ENCODE measurements at regions of chr6 and their contacts with region 1.

Region 1: GRCh38 chr6:37207903-37208456 is 38.0 kb downstream of the PIM1 start:
- DNase-seq: peak; percentile 94
- H3K4me3 Mint-ChIP-seq: peak overlapping the region; percentile 17
- H3K27ac Mint-ChIP-seq: peak overlapping the region; percentile 78
- H3K4me1 Mint-ChIP-seq: peaks cover 67% of the 10 kb centered on the region
- H3K27me3 Mint-ChIP-seq: no peaks in the 10 kb centered on the region

Region 2: DNA sequence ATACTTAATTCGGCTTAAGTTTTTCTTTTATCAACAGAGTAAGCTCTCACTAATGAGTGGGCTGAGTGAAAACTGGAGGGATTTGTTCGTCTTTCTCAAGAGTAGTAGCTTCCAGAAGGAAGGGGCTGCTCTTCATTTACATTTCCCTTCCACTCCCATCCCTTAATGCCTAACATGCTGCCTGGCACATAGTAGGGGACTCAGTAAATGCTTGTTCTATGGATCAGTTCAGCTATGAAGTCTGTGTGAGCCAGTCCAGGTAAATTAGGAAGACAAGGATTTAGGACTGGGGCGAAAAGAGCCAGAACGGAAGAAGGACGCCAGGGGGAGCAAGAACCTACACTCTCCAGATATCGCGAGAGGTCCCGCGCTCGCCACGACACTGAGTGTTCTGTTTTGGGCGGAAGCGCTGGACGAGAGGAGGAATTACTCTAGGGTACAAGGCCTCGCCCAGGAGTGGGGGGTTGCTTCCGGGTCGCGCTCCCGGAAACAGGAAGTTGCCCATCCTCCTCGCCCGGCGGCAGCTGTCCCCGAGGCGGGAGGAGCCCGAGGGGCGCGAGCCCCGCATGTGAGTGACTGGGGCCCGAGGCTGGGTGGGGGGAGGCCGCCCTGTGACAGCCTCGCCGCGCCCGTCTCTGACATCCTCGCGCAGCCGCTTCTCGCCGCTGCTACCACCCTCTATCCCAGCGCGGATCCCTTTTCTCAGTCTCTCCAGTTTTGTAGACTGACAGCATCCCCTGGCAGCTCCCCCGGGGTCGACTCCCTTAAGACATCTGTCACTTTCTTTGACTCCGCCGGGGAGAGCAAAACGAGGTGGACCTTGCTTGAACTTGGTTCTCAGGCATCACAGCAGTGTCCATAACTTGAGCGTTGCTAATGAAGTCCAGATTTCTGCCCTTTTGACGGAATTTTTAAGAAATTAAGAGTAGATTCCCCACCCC is 322.2 kb before region 1 on chr6 and contains the start of gene C6orf89:
- CTCF ChIA-PET with region 1: interaction called, 12 read pairs
- POLR2A ChIA-PET with region 1: interaction called, 3 read pairs
- DNase-seq: peak; percentile 98
- H3K4me3 Mint-ChIP-seq: peak within 1 kb of the TSS; percentile 89
- H3K27ac Mint-ChIP-seq: peak within 1 kb of the TSS; percentile 76
- H3K4me1 Mint-ChIP-seq: peaks cover 36% of the 10 kb centered on the region
- H3K27me3 Mint-ChIP-seq: no peaks in the 10 kb centered on the region
- total RNA-seq, gene C6orf89: 51.8 to 53.8 TPM

Region 3: DNA sequence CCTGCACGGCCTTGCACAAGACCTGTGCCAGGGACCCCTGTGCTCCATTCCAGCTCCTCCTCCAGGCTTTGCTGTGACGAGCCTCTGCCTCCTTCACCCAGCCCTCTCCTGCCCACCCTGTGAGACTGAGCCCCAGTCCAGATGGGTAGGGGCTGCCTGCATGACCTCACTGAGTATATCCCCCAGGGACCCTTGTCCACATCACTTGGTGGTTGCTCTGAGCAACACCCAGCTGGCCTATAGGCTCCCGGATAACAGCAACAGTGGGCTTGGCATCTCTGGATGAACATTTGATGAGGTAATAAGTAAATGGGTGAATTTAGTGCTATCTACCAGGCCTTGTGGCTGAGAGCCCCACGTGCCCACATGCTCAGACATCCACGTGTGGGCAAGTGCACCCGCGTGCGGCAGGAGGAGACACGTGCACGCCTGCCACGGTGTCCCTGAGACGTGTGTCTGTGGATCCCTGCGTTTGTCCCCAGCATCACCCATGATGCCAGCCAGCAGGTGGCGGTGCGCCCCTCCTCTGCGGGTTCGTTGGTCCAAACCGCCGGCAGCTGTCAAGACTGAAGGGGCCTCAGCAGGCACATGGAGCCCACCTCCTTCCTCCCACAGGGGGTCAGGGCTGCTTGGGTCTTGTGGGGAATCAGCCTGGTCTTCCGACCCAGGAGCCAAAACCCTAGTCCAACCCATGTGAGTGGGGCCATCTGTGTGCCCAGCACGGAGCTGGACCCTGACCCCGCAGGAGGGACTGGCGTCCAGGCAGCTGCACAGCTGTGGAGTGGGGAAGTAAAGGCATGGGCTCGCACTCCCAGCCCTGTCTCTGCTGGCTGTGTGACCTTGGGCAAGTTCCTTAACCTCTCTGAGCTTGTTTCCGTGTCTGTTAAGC is 156.6 kb before region 1 on chr6:
- CTCF ChIA-PET with region 1: interaction called, 163 read pairs
- POLR2A ChIA-PET with region 1: interaction called, 144 read pairs
- DNase-seq: peak; percentile 94
- H3K4me3 Mint-ChIP-seq: peak overlapping the region; percentile 88
- H3K27ac Mint-ChIP-seq: peak overlapping the region; percentile 99
- H3K4me1 Mint-ChIP-seq: peaks cover 71% of the 10 kb centered on the region
- H3K27me3 Mint-ChIP-seq: no peaks in the 10 kb centered on the region

Region 4: GRCh38 chr6:37190159-37190535 is 17.8 kb before region 1 on chr6:
- CTCF ChIA-PET with region 1: interaction called, 143 read pairs
- POLR2A ChIA-PET with region 1: interaction called, 15 read pairs
- DNase-seq: no peak
- H3K4me3 Mint-ChIP-seq: no peak overlapping the region
- H3K27ac Mint-ChIP-seq: peak overlapping the region; percentile 67
- H3K4me1 Mint-ChIP-seq: peaks cover 71% of the 10 kb centered on the region
- H3K27me3 Mint-ChIP-seq: no peaks in the 10 kb centered on the region

Region 5: GRCh38 chr6:37257634-37258404 is 49.8 kb after region 1 on chr6 and contains the starts of genes TBC1D22B and TMEM217:
- CTCF ChIA-PET with region 1: interaction called, 13 read pairs
- POLR2A ChIA-PET with region 1: interaction called, 4 read pairs
- DNase-seq: peak; percentile 97
- H3K4me3 Mint-ChIP-seq: peak within 1 kb of the TSS; percentile 83
- H3K27ac Mint-ChIP-seq: peak within 1 kb of the TSS; percentile 86
- H3K4me1 Mint-ChIP-seq: peaks cover 44% of the 10 kb centered on the region
- H3K27me3 Mint-ChIP-seq: no peaks in the 10 kb centered on the region
- total RNA-seq, gene TBC1D22B: 16.5 TPM
- total RNA-seq, gene TMEM217: 1.6 to 2.1 TPM

Region 6: DNA sequence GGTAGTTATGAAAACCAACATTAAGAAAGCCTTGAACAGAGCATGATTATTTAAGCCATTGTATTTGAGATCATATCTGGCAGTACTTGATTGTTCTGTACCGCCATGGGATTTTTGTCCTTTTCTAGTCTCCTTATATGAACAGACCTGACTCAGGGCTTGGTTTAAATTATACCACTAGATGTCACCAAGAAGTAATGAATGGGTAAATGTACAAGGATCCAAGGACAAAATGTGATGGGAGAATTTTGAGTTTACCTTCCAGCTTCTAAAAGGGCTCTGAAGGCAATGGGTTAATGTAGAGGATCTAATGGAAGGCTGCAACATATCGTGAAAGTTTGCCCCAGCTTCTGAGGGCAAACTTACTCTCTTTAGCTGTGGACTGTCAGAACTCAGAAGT is 157.8 kb after region 1 on chr6:
- CTCF ChIA-PET with region 1: no interaction called
- POLR2A ChIA-PET with region 1: no interaction called
- DNase-seq: no peak
- H3K4me3 Mint-ChIP-seq: no peak overlapping the region
- H3K27ac Mint-ChIP-seq: no peak overlapping the region
- H3K4me1 Mint-ChIP-seq: peaks cover 9% of the 10 kb centered on the region
- H3K27me3 Mint-ChIP-seq: no peaks in the 10 kb centered on the region

Measured in activated CD4-positive, alpha-beta memory T cell treated with anti-CD3 and anti-CD28 coated beads, Interleukin-2, amount 10 ng/mL, durations not matched to agents 7 days and 5 days (primary cell).